GM12878 (cell line): ENCODE measurements at regions of chr2 and their contacts with region 1.

Region 1: DNA sequence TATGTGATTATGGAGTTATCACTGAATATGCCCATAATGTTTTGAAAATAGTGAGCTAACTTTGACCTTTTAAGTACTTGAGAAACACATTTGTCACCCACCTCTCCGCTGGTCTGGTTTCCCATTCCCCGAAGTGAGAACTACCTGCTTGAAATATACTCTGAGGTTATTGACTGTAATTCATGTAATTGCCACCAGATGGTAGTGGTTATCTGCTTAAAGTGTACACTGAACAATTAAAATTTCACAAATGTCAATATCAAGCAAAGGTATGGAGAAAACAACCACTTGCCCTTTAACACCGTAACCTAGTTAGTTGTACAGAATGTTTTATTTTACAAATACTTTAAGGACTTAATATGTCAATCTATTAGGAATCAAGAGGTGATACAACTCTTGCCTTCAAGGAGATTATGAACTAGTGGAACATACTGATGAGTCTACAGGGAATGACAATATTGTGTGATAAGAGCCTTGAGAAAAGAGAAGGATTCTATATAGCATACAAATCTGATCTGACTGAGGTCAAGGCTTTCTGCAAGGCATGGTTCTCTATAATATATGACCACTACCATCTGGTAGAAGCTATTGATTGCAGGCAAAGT is 316.8 kb upstream of the KCNH7 start:
- DNase-seq: peak; percentile 3
- ATAC-seq: peak; percentile 84
- H3K4me3 ChIP-seq: no peak overlapping the region
- H3K27ac ChIP-seq: no peak overlapping the region
- H3K4me1 ChIP-seq: no peaks in the 10 kb centered on the region
- H3K27me3 ChIP-seq: no peaks in the 10 kb centered on the region
- CTCF ChIP-seq: peak; percentile 32 to 57 (median 55); a peak in 5 of 6 replicates
- EP300 ChIP-seq: no peak
- POLR2A ChIP-seq: no peak
- RAD21 ChIP-seq: peak; percentile 56

Region 2: DNA sequence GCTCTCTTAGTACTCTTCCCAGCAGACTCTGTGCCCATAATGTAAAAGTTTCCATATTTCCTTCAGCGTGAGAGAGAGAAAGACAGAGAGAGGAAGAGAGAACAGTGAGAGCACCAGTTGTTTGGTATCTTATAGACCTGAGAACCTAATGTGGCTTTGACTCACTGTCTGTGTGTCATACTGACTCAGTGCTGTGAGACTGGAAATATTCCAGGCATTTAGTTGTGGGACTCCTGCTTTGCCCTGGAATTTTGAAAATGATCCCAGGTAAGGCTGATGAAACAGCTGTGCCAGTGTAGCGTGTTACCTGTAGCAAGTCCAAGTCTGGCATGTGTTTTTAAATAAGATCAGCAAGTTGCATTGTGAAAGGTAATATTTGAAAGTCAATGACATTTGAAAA is 228.9 kb before region 1 on chr2:
- CTCF ChIA-PET with region 1: no interaction called
- POLR2A ChIA-PET with region 1: no interaction called
- RAD21 ChIA-PET with region 1: no interaction called
- SMC1A ChIA-PET with region 1: no interaction called
- in situ Hi-C with region 1: no loop called
- intact Hi-C with region 1: no loop called
- DNase-seq: no peak
- ATAC-seq: peak; percentile 34; the same call in 2 of the 3 replicates
- H3K4me3 ChIP-seq: no peak overlapping the region
- H3K27ac ChIP-seq: no peak overlapping the region
- H3K4me1 ChIP-seq: no peaks in the 10 kb centered on the region
- H3K27me3 ChIP-seq: no peaks in the 10 kb centered on the region
- CTCF ChIP-seq: no peak
- EP300 ChIP-seq: no peak
- POLR2A ChIP-seq: no peak
- RAD21 ChIP-seq: no peak

Region 3: DNA sequence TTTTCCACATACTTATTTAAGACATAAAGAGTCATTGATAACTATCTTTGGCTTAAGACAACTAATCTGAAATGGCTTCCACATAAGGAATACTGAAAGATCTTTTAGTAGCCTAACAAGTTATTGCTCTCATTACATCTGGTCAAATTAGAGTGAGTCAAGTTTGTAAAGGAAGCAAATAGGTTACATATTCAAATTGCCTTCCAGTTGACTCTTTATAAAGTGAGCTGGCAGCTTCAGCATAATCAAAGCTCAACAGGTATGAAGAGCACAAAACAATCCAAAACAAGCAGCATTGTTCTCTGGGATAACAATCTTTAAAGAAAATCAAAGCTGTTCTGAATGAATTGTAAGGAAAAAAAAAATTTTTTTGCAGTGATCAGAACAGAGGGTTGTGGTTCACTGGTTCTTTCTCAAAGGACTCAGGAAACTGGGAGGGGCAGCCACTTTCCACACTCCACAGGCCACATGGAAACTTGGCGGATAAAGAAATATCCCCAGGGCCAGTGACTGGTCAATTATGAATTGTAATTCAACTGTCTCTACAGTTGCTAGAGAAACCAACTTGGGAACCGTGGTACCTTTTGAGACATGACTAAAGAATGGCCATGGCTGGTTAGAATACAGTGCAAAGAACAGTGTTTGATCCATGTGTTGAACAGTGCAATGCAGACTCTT is 52.5 kb after region 1 on chr2:
- CTCF ChIA-PET with region 1: no interaction called
- POLR2A ChIA-PET with region 1: no interaction called
- RAD21 ChIA-PET with region 1: no interaction called
- SMC1A ChIA-PET with region 1: no interaction called
- in situ Hi-C with region 1: no loop called
- intact Hi-C with region 1: no loop called
- DNase-seq: no peak
- ATAC-seq: no peak
- H3K4me3 ChIP-seq: no peak overlapping the region
- H3K27ac ChIP-seq: no peak overlapping the region
- H3K4me1 ChIP-seq: no peaks in the 10 kb centered on the region
- H3K27me3 ChIP-seq: no peaks in the 10 kb centered on the region
- CTCF ChIP-seq: no peak
- EP300 ChIP-seq: no peak
- POLR2A ChIP-seq: no peak
- RAD21 ChIP-seq: no peak

Region 4: GRCh38 chr2:163719331-163719730 is 564.0 kb after region 1 on chr2:
- CTCF ChIA-PET with region 1: no interaction called
- POLR2A ChIA-PET with region 1: no interaction called
- RAD21 ChIA-PET with region 1: no interaction called
- SMC1A ChIA-PET with region 1: no interaction called
- in situ Hi-C with region 1: no loop called
- intact Hi-C with region 1: no loop called
- DNase-seq: no peak
- ATAC-seq: no peak
- H3K4me3 ChIP-seq: no peak overlapping the region
- H3K27ac ChIP-seq: no peak overlapping the region
- H3K4me1 ChIP-seq: no peaks in the 10 kb centered on the region
- H3K27me3 ChIP-seq: no peaks in the 10 kb centered on the region; a peak in 1 of 4 replicates
- CTCF ChIP-seq: no peak
- EP300 ChIP-seq: no peak
- POLR2A ChIP-seq: no peak
- RAD21 ChIP-seq: no peak

Region 5: DNA sequence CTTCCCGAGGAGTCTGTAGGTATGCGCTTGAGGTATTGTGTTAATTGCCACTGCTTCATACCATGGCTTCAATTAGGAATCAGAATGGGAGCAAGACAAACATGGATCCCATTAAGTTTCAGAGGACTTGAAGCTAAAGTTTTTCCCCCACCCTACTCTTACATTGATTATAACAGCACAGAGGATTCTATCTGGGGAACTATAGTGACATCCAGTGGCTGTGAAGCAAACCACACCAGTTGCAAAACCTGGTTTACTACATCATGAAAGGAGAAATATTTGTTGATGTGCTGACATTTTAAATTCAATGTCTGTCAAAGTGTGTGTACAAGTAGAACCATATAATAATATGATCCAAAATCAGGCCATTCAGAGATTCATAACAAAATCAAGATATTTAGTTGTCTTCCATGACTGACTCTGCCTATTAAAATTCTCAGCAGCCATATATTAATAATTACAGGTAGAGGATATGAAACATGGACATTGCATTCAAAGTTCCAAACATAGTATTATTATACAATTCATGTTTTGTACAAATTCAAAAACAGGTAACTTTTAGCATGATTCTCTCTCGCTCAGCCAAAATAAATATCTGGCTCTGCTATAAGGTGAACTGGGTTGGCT is 1383.0 kb after region 1 on chr2:
- CTCF ChIA-PET with region 1: no interaction called
- POLR2A ChIA-PET with region 1: no interaction called
- RAD21 ChIA-PET with region 1: no interaction called
- SMC1A ChIA-PET with region 1: no interaction called
- in situ Hi-C with region 1: no loop called
- intact Hi-C with region 1: loop called (anchors 10 kb)
- DNase-seq: no peak
- ATAC-seq: peak; percentile 87
- H3K4me3 ChIP-seq: no peak overlapping the region
- H3K27ac ChIP-seq: no peak overlapping the region
- H3K4me1 ChIP-seq: no peaks in the 10 kb centered on the region
- H3K27me3 ChIP-seq: no peaks in the 10 kb centered on the region
- CTCF ChIP-seq: peak; percentile 50 to 56 (median 51); a peak in 5 of 6 replicates
- EP300 ChIP-seq: no peak
- POLR2A ChIP-seq: no peak
- RAD21 ChIP-seq: peak; percentile 60

Region 6: GRCh38 chr2:164599966-164600589 is 1444.7 kb after region 1 on chr2:
- CTCF ChIA-PET with region 1: no interaction called
- POLR2A ChIA-PET with region 1: no interaction called
- RAD21 ChIA-PET with region 1: no interaction called
- SMC1A ChIA-PET with region 1: no interaction called
- in situ Hi-C with region 1: no loop called
- intact Hi-C with region 1: loop called (anchors 10 kb)
- DNase-seq: no peak
- ATAC-seq: peak; percentile 97
- H3K4me3 ChIP-seq: no peak overlapping the region
- H3K27ac ChIP-seq: no peak overlapping the region
- H3K4me1 ChIP-seq: no peaks in the 10 kb centered on the region
- H3K27me3 ChIP-seq: no peaks in the 10 kb centered on the region
- CTCF ChIP-seq: peak; percentile 70 to 89 (median 78)
- EP300 ChIP-seq: no peak
- POLR2A ChIP-seq: no peak
- RAD21 ChIP-seq: peak; percentile 50